Activated naive CD8-positive, alpha-beta T cell treated with anti-CD3 and anti-CD28 coated beads, Interleukin-2, amount 10 ng/mL, durations not matched to agents 7 days and 5 days (primary cell): ENCODE measurements at regions of chr19 and their contacts with region 1.

Region 1: GRCh38 chr19:16111160-16111908 is at the start of gene RAB8A:
- DNase-seq: peak; percentile 100
- ATAC-seq: peak; percentile 95
- H3K4me3 Mint-ChIP-seq: peak within 1 kb of the TSS; percentile 95
- H3K27ac Mint-ChIP-seq: peak within 1 kb of the TSS; percentile 97
- H3K4me1 Mint-ChIP-seq: peaks cover 27% of the 10 kb centered on the region
- H3K27me3 Mint-ChIP-seq: no peaks in the 10 kb centered on the region
- total RNA-seq, gene RAB8A: 133 to 153 TPM

Region 2: GRCh38 chr19:15954820-15955219 is 156.5 kb before region 1 on chr19:
- POLR2A ChIA-PET with region 1: no interaction called
- DNase-seq: no peak
- ATAC-seq: no peak
- H3K4me3 Mint-ChIP-seq: no peak overlapping the region
- H3K27ac Mint-ChIP-seq: no peak overlapping the region
- H3K4me1 Mint-ChIP-seq: no peaks in the 10 kb centered on the region
- H3K27me3 Mint-ChIP-seq: peaks cover 33% of the 10 kb centered on the region

Region 3: DNA sequence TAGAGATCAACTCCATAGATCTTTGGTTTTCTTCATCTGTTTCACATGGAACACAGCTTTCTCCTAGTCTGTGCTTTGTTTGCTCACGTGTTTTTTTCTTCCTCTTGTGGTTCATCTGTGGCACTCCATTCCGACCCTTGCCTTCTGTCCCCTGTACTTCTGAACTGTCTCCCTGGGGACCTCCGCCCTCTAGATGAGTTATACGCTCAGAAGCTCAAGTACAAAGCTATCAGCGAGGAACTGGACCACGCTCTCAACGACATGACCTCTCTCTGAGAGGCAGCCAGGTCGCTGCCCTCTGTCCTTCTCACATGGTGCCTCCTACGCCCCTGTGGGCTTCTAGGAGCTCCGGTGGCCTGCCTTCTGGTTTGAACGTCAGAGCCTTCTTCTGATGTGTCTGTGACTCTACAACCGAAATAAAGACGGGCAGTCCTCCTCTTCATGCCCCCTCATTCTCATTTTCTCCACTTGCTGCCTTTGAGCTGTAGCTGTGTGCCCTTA is 16.2 kb before region 1 on chr19:
- POLR2A ChIA-PET with region 1: interaction called, 13 read pairs
- DNase-seq: no peak
- ATAC-seq: peak; percentile 67
- H3K4me3 Mint-ChIP-seq: peak overlapping the region; percentile 54
- H3K27ac Mint-ChIP-seq: peak overlapping the region; percentile 72
- H3K4me1 Mint-ChIP-seq: peaks cover 33% of the 10 kb centered on the region
- H3K27me3 Mint-ChIP-seq: no peaks in the 10 kb centered on the region

Region 4: DNA sequence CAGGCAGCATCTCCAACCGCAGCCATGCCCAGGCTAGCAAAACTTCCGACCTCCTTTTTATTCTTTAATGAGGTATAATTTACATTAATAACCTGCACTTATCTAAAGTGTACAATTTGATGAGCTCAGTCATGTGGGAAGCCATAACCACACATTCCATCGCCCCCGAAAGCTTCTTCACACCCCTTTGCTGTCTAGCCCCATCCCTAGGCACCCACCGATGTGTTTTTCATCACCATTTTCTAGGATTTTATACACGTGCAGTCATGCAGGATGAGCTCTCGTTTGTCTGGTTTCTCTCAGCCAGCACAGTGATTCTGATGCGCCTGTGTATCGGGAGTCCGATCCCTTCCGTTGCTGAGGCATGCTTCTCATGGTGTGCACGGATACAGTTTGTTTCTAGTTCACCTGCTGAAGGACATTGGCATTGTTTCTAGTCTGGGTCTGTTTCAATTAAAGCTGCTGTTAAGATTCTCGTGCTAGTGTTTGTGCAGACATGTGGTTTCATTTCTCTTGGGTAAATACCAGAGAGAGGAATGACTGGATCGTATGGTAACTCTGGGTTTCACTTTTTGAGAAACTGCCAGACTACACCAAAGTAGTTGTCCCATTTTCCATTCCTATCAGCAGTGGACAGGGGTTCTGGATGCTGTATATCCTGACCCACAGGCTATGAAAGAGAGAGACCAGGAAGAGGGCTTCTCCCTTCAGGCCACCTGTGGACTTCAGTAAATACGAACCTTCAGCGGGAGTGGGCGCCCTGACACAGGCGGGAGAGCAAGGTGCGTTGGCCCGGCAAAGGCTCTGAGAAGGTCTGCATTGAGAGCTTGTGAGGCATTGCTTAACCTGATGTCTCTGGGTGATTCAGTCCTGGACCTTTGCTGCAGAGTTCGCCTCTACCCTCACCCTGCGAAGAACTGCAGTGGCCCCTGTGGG is 91.3 kb after region 1 on chr19:
- POLR2A ChIA-PET with region 1: no interaction called
- DNase-seq: no peak
- ATAC-seq: no peak
- H3K4me3 Mint-ChIP-seq: peak overlapping the region; percentile 0
- H3K27ac Mint-ChIP-seq: no peak overlapping the region
- H3K4me1 Mint-ChIP-seq: peaks cover 45% of the 10 kb centered on the region
- H3K27me3 Mint-ChIP-seq: no peaks in the 10 kb centered on the region